ENCODE measurements at regions of chr4 and their contacts with region 1.

Region 1: GRCh38 chr4:27000820-27001219 is 140.2 kb downstream of the STIM2 start:
- DNase-seq: peak; percentile 70
- H3K4me3 ChIP-seq: no peak overlapping the region
- H3K27ac ChIP-seq: peak overlapping the region; percentile 38
- H3K4me1 ChIP-seq: peaks cover 65% of the 10 kb centered on the region
- CTCF ChIP-seq: peak; percentile 77

Region 2: GRCh38 chr4:25862411-25863346 is 1138.1 kb before region 1 on chr4 and contains the start of gene SEL1L3:
- CTCF ChIA-PET with region 1: no interaction called
- POLR2A ChIA-PET with region 1: no interaction called
- intact Hi-C with region 1: loop called (anchors 5 kb)
- DNase-seq: peak; percentile 67
- H3K4me3 ChIP-seq: peak within 1 kb of the TSS; percentile 75
- H3K27ac ChIP-seq: peak within 1 kb of the TSS; percentile 99
- H3K4me1 ChIP-seq: peaks cover 69% of the 10 kb centered on the region
- CTCF ChIP-seq: no peak
- total RNA-seq, gene SEL1L3: 173 and 180 TPM in 2 replicates

Region 3: GRCh38 chr4:26787461-26788340 is 213.1 kb before region 1 on chr4:
- CTCF ChIA-PET with region 1: no interaction called
- POLR2A ChIA-PET with region 1: interaction called, 22 read pairs
- intact Hi-C with region 1: no loop called
- DNase-seq: peak; percentile 88
- H3K4me3 ChIP-seq: peak overlapping the region; percentile 59
- H3K27ac ChIP-seq: peak overlapping the region; percentile 84
- H3K4me1 ChIP-seq: peaks cover 42% of the 10 kb centered on the region
- CTCF ChIP-seq: peak; percentile 86

Region 4: GRCh38 chr4:26878794-26879391 is 121.9 kb before region 1 on chr4:
- CTCF ChIA-PET with region 1: no interaction called
- POLR2A ChIA-PET with region 1: interaction called, 63 read pairs
- intact Hi-C with region 1: no loop called
- DNase-seq: no peak
- H3K4me3 ChIP-seq: no peak overlapping the region
- H3K27ac ChIP-seq: no peak overlapping the region
- H3K4me1 ChIP-seq: peaks cover 35% of the 10 kb centered on the region
- CTCF ChIP-seq: no peak

Region 5: GRCh38 chr4:26985873-26986272 is 14.9 kb before region 1 on chr4:
- CTCF ChIA-PET with region 1: interaction called, 3 read pairs
- POLR2A ChIA-PET with region 1: interaction called, 112 read pairs
- intact Hi-C with region 1: no loop called
- DNase-seq: peak; percentile 71
- H3K4me3 ChIP-seq: peak overlapping the region; percentile 32
- H3K27ac ChIP-seq: peak overlapping the region; percentile 51
- H3K4me1 ChIP-seq: peaks cover 51% of the 10 kb centered on the region
- CTCF ChIP-seq: no peak